Heart left ventricle (tissue), 16 donors: ENCODE measurements at regions of chr1 and their contacts with region 1.

Region 1: DNA sequence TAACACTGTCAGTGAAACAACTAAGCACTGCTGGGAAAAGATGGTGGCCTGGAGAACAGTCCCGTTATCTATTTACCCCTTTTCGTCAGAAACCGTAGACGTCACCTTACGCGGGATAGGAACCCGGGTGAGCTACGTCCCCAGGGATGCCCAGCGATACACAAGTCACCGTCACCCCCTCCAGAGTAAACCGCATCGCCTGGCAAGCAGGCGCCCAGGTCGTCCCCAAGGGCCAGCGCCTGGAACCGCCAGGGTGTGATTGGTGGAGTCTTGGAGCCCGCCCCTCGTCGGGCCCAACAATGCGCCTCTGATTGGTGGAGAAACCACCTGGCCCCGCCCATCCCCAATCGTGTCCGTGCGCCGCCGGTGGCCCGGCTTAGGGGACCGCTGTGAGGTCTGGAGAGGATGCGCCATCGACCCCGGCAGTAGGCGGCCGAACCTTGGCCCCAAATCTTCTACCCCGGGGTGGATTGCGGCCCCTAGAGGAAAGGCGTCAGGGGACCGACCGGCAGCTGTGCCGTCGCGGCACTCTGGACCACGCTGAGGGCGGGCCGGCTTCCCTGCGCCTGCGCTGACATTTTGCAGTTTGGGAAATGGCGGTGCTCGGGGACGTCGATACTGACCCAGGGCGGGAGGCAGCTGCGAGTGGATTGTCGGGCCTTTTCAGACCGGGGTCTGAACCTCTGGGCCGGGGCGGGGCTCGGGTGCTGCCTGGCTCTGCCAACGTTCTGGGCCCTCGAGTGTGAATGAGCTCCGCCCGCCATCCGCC is 34.4 kb downstream of the SLC2A1 start:
- DNase-seq: peak; percentile 96 to 97 (median 97)
- ATAC-seq: peak; percentile 98 to 99 (median 98)
- H3K4me3 ChIP-seq: peak overlapping the region; percentile 37 to 95 (median 84)
- H3K27ac ChIP-seq: peak overlapping the region; percentile 86 to 98 (median 94)
- H3K4me1 ChIP-seq: peaks cover 0 to 14% (median 6%) of the 10 kb centered on the region in 12 donors
- H3K27me3 ChIP-seq: no peaks in the 10 kb centered on the region
- CTCF ChIP-seq: peak in 5 of 12 donors; percentile 14 to 39 (median 18)
- POLR2A ChIP-seq: peak; percentile 82 to 91

Region 2: DNA sequence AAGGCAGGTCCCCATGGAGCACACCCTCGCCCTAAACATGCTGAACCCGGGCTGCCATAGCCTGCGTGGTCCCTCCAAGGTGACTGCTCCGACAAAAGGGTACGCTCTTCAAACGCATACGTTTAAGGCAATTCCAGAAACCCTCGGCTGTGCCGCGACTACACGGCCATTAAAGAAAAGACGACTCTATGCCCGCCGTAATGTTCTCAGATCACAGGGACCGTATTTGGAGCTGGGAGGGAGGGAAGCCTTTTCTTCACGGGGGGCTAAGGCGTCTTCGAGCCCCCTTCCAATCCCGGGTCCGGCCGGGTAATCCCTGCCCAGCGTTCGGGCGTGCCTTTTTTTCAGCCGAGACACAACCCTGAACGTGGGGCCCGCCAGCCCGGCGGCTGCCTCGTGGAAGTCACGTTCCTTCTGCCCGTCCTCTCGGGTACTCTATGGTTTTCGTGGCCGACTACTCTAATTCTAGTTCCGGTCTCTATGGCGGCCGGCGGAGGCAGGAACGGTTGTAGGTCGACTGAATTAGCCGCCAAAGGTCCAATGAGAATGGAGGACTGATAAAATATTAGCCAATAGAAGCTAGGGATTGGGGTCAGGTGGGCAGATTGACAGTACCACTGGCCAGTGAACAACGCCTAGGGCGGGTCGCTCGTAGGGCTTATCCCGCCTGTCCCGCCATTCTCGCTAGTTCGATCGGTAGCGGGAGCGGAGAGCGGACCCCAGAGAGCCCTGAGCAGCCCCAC is 242.4 kb before region 1 on chr1 and contains the start of gene YBX1:
- intact Hi-C with region 1: loop called in 1 of 10 experiments (anchors 10 kb)
- DNase-seq: peak; percentile 96 to 97 (median 97)
- ATAC-seq: peak; percentile 97 to 99 (median 98)
- H3K4me3 ChIP-seq: peak within 1 kb of the TSS; percentile 64 to 99 (median 85)
- H3K27ac ChIP-seq: peak within 1 kb of the TSS; percentile 86 to 100 (median 96)
- H3K4me1 ChIP-seq: peaks cover 21 to 58% (median 44%) of the 10 kb centered on the region in 12 donors
- H3K27me3 ChIP-seq: no peaks in the 10 kb centered on the region
- CTCF ChIP-seq: no peak
- POLR2A ChIP-seq: peak in 1 of 2 donors; percentile 84
- total RNA-seq, gene YBX1: 663 to 1,139 (median 788) TPM

Region 3: GRCh38 chr1:42766741-42767509 is 157.3 kb before region 1 on chr1 and contains the starts of genes C1orf50 and P3H1:
- intact Hi-C with region 1: loop called in 4 of 10 experiments (anchors 5 to 10 kb)
- DNase-seq: peak; percentile 100
- ATAC-seq: peak; percentile 96 to 99 (median 98)
- H3K4me3 ChIP-seq: peak within 1 kb of the TSS; percentile 82 to 98 (median 94)
- H3K27ac ChIP-seq: peak within 1 kb of the TSS; percentile 72 to 97 (median 92)
- H3K4me1 ChIP-seq: peaks cover 3 to 47% (median 30%) of the 10 kb centered on the region in 12 donors
- H3K27me3 ChIP-seq: no peaks in the 10 kb centered on the region
- CTCF ChIP-seq: peak in 1 of 12 donors; percentile 10
- POLR2A ChIP-seq: peak; percentile 98 to 99
- total RNA-seq, gene C1orf50: 3.0 to 9.2 (median 5.8) TPM
- total RNA-seq, gene P3H1: 6.9 to 27.9 (median 10.0) TPM

Region 4: DNA sequence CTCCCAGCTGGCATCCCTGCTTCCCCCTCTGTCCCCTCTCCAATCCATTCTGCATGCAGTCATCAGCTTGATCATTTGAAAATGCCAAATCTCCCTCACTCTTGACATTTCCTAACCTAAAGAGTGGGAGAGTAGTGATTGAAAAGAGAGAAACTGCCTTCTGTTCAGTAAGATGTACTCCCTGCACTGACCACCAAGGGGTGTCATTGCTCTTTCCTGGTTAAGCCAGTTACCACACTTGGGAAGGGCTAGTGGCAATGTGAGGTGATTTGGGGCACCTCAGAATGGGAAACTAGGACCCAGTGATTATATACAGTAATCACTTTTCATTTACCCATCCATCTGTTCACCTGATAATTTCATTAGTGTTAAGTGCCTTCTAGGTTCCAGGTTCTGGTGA is 146.4 kb before region 1 on chr1:
- intact Hi-C with region 1: loop called in 2 of 10 experiments (anchors 10 kb)
- DNase-seq: no peak
- ATAC-seq: peak in 3 of 4 donors; percentile 53 to 71 (median 63)
- H3K4me3 ChIP-seq: no peak overlapping the region
- H3K27ac ChIP-seq: no peak overlapping the region
- H3K4me1 ChIP-seq: peaks cover 0 to 3% (median 0%) of the 10 kb centered on the region in 12 donors
- H3K27me3 ChIP-seq: no peaks in the 10 kb centered on the region
- CTCF ChIP-seq: peak; percentile 35 to 65 (median 56)
- POLR2A ChIP-seq: no peak

Region 5: GRCh38 chr1:42846257-42847110 is 77.8 kb before region 1 on chr1 and contains the start of gene ZNF691:
- intact Hi-C with region 1: no loop called
- DNase-seq: peak; percentile 93 to 97 (median 96)
- ATAC-seq: peak; percentile 98 to 99 (median 98)
- H3K4me3 ChIP-seq: peak within 1 kb of the TSS; percentile 69 to 99 (median 90)
- H3K27ac ChIP-seq: peak within 1 kb of the TSS; percentile 85 to 96 (median 89)
- H3K4me1 ChIP-seq: peaks cover 0 to 28% (median 16%) of the 10 kb centered on the region in 12 donors
- H3K27me3 ChIP-seq: no peaks in the 10 kb centered on the region
- CTCF ChIP-seq: peak; percentile 25 to 77 (median 43)
- POLR2A ChIP-seq: peak in 1 of 2 donors; percentile 75
- total RNA-seq, gene ZNF691: 4.9 to 11.6 (median 8.4) TPM

Region 6: DNA sequence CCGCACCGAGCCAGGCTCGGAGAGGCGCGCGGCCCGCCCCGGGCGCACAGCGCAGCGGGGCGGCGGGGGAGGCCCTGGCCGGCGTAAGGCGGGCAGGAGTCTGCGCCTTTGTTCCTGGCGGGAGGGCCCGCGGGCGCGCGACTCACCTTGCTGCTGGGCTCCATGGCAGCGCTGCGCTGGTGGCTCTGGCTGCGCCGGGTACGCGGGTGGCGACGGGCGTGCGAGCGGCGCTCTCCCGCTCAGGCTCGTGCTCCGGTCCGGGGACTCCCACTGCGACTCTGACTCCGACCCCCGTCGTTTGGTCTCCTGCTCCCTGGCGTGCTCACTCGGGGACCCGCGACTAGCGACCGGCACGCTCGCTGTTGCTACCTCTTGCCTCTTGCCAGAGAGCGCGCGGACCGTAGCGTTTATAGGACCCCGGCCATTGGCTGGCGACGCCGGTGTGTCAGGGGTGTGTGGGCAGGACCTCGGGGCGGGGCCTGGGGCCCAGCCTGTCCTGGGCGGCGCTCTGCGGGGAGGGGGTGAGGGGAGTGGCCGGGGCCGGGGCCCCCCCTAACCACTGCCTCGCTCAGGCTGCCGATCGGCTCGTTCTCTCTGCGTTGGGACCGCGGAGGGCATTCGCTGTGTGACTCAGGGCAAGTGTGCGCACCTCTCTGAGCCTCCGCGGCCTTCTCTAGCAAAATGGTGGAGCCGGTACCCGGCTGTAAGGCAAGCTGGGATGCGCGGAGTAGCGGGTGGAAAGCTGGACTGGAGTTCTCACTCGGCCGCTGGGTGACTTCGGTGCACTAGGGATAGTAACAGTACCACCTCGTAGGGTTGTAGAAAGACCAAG is 34.4 kb after region 1 on chr1 and contains the start of gene SLC2A1:
- intact Hi-C with region 1: loop called in 2 of 10 experiments (anchors 2 to 5 kb)
- DNase-seq: peak; percentile 84 to 95 (median 93)
- ATAC-seq: peak; percentile 91 to 98 (median 94)
- H3K4me3 ChIP-seq: peak within 1 kb of the TSS; percentile 58 to 97 (median 72)
- H3K27ac ChIP-seq: peak within 1 kb of the TSS; percentile 49 to 93 (median 86)
- H3K4me1 ChIP-seq: peaks cover 0 to 53% (median 20%) of the 10 kb centered on the region in 12 donors
- H3K27me3 ChIP-seq: peaks cover 0 to 10% (median 0%) of the 10 kb centered on the region in 9 donors
- CTCF ChIP-seq: no peak
- POLR2A ChIP-seq: peak; percentile 28 to 86
- total RNA-seq, gene SLC2A1: 19.0 to 88.1 (median 29.9) TPM

Region 7: GRCh38 chr1:43073490-43074230 is 149.4 kb after region 1 on chr1:
- intact Hi-C with region 1: loop called in 1 of 10 experiments (anchors 5 kb)
- DNase-seq: peak in 4 of 5 donors; percentile 64 to 78 (median 68)
- ATAC-seq: peak; percentile 68 to 91 (median 88)
- H3K4me3 ChIP-seq: no peak overlapping the region
- H3K27ac ChIP-seq: peak overlapping the region in 2 of 12 donors; percentile 40 to 44
- H3K4me1 ChIP-seq: peaks cover 0 to 9% (median 0%) of the 10 kb centered on the region in 12 donors
- H3K27me3 ChIP-seq: peaks cover 0 to 2% (median 0%) of the 10 kb centered on the region in 9 donors
- CTCF ChIP-seq: peak; percentile 69 to 93 (median 84)
- POLR2A ChIP-seq: no peak

Region 8: GRCh38 chr1:43389326-43390313 is 465.4 kb after region 1 on chr1 and contains the starts of genes MED8 and SZT2:
- intact Hi-C with region 1: loop called in 1 of 10 experiments (anchors 10 kb)
- DNase-seq: peak; percentile 95 to 97 (median 96)
- ATAC-seq: peak; percentile 98 to 99 (median 99)
- H3K4me3 ChIP-seq: peak within 1 kb of the TSS; percentile 51 to 98 (median 84)
- H3K27ac ChIP-seq: peak within 1 kb of the TSS; percentile 1 to 89 (median 83)
- H3K4me1 ChIP-seq: peaks cover 13 to 32% (median 26%) of the 10 kb centered on the region in 12 donors
- H3K27me3 ChIP-seq: no peaks in the 10 kb centered on the region
- CTCF ChIP-seq: no peak
- POLR2A ChIP-seq: peak; percentile 15 to 85
- total RNA-seq, gene MED8: 13.7 to 25.4 (median 16.9) TPM
- total RNA-seq, gene SZT2: 19.0 to 39.7 (median 24.4) TPM